HEK293 (cell line): ENCODE measurements at regions of chrX and their contacts with region 1.

Region 1: GRCh38 chrX:119852382-119853353 is at the start of gene UPF3B:
- H3K4me3 ChIP-seq: peak within 1 kb of the TSS; percentile 85
- H3K27ac ChIP-seq: peak within 1 kb of the TSS; percentile 79
- H3K4me1 ChIP-seq: no peaks in the 10 kb centered on the region
- CTCF ChIP-seq: no peak

Region 2: GRCh38 chrX:119871599-119872395 is 19.1 kb after region 1 on chrX and contains the starts of genes NDUFA1 and RNF113A:
- CTCF ChIA-PET with region 1: interaction called, 3 read pairs
- POLR2A ChIA-PET with region 1: interaction called, 33 read pairs
- H3K4me3 ChIP-seq: peak within 1 kb of the TSS; percentile 59
- H3K27ac ChIP-seq: peak within 1 kb of the TSS; percentile 90
- H3K4me1 ChIP-seq: no peaks in the 10 kb centered on the region
- CTCF ChIP-seq: no peak